CD4-positive, alpha-beta memory T cell (primary cell): ENCODE measurements at regions of chr3 and their contacts with region 1.

Region 1: GRCh38 chr3:150408221-150409102 is at the start of gene TSC22D2:
- DNase-seq: peak; percentile 96 to 98 (median 97)
- H3K4me3 ChIP-seq: peak within 1 kb of the TSS; percentile 79 to 93
- H3K4me3 Mint-ChIP-seq: peak within 1 kb of the TSS; percentile 85 to 98 (median 89)
- H3K27ac ChIP-seq: peak within 1 kb of the TSS; percentile 95
- H3K27ac Mint-ChIP-seq: peak within 1 kb of the TSS; percentile 89 to 99 (median 98)
- H3K4me1 ChIP-seq: peaks cover 34% of the 10 kb centered on the region
- H3K4me1 Mint-ChIP-seq: peaks cover 23 to 36% (median 30%) of the 10 kb centered on the region in 4 donors
- H3K27me3 ChIP-seq: no peaks in the 10 kb centered on the region
- H3K27me3 Mint-ChIP-seq: no peaks in the 10 kb centered on the region
- total RNA-seq, gene TSC22D2: 25.3 to 25.7 TPM

Region 2: DNA sequence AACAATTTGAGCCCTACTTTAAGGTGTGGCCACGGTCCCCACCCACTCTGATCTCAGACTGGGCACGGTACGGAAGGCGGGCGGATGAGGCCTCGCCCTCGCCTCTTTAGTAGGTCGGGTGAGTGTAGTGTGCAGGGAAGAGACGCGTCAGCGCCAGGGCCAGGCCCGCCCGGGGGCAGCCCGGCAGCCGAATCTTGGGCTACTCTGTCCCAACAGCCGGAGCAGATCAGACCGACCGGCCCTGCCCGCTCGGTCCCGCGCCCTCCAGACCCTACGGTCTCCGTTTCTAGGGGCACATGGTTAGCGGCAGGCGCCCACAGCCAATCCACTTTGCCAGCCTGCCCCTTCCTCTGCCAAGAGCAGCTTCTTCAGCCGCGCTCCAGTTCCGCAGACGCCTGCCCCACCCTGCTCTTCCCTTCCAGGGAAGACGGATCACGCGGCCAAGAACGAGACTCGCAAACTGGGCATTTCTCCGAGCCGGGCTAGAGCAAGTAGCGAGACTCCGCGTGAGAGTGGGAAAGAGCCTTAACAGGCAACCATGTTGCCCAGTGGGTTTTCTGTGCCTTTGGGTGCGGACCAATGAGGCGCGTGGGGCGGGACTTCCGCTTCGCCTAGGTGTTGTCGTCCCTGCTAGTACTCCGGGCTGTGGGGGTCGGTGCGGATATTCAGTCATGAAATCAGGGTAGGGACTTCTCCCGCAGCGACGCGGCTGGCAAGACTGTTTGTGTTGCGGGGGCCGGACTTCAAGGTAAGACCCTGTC is 595.7 kb before region 1 on chr3 and contains the start of gene RNF13:
- CTCF ChIA-PET with region 1: no interaction called
- POLR2A ChIA-PET with region 1: interaction called, 7 read pairs
- intact Hi-C with region 1: loop called (anchors 2 kb)
- DNase-seq: peak; percentile 90 to 94 (median 91)
- H3K4me3 ChIP-seq: peak within 1 kb of the TSS; percentile 91 to 92
- H3K4me3 Mint-ChIP-seq: peak within 1 kb of the TSS; percentile 99 to 100 (median 100)
- H3K27ac ChIP-seq: peak within 1 kb of the TSS; percentile 88
- H3K27ac Mint-ChIP-seq: peak within 1 kb of the TSS; percentile 96 to 100 (median 99)
- H3K4me1 ChIP-seq: peaks cover 42% of the 10 kb centered on the region
- H3K4me1 Mint-ChIP-seq: peaks cover 34 to 63% (median 45%) of the 10 kb centered on the region in 4 donors
- H3K27me3 ChIP-seq: no peaks in the 10 kb centered on the region
- H3K27me3 Mint-ChIP-seq: peaks cover 2 to 4% of the 10 kb centered on the region in 2 donors
- total RNA-seq, gene RNF13: 63.3 to 68.2 TPM

Region 3: DNA sequence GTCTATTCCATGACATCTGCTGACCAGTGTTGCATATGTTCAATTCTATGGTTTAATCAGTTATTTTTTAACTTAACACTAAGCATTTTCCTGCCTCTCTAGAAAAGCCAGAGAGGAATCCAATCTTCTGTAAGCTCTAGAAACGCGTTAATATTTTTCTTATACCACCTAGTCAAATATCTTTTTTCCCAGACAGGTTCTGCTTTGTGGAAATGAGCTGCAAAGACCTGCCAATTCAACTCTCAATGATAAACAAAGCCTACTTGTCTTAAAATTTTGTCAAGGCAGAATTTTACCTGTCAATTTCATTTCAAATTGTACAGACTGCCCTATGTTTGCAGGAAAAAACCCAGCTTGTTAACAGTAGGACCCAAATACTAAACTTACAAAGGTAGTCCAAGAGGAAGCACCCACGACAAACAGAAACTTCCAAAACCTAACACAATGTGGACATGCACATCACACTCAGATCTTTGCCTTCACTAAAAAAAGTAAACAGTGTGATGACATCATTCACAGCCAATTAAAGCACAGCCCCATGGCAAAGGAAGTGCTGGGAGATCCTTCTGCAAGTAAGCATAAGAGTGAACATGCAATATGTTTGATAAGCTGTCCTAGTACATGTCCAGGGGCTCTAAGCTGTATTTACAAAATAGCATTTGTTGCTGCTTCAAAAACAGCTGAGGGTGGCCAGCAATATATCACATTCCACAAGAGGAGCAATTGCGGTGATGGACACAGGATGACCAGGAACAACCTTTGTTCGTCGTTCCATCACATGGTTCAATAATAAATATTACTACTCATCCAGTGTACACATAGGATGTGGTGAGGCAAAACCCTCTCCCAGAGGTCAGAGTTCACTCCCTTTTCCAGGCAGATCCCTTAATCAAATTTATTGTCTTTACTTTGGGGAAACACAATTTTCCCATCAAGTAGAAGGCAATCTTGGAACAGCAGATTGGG is 139.8 kb before region 1 on chr3:
- CTCF ChIA-PET with region 1: no interaction called
- POLR2A ChIA-PET with region 1: no interaction called
- intact Hi-C with region 1: no loop called
- DNase-seq: no peak
- H3K4me3 ChIP-seq: no peak overlapping the region
- H3K4me3 Mint-ChIP-seq: no peak overlapping the region
- H3K27ac ChIP-seq: no peak overlapping the region
- H3K27ac Mint-ChIP-seq: no peak overlapping the region
- H3K4me1 ChIP-seq: no peaks in the 10 kb centered on the region
- H3K4me1 Mint-ChIP-seq: no peaks in the 10 kb centered on the region
- H3K27me3 ChIP-seq: no peaks in the 10 kb centered on the region
- H3K27me3 Mint-ChIP-seq: peaks cover 0 to 13% of the 10 kb centered on the region in 2 donors

Region 4: DNA sequence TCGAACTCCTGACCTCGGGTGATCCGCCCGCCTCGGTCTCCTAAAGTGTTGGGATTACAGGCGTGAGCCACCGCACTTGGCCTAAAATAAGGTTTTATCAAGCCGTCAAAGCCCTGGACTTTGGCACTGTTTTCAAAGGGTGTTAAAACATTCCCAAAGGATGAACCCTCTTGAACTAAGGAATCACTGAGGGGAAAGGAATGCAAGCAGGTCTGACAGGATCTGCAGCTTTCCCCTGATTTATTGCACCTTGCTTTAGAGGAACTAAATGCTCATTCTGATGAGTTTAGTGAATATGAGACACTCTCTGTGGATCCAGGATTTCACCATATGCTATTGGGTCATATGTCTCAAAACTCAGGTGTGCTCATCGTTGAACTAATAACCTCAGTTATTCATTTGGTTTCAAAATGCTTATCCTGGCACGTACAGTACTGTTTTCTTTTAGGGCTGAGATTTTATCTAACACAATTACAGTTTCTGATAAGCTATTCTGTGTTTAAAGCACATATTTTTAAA is 63.4 kb before region 1 on chr3:
- CTCF ChIA-PET with region 1: no interaction called
- POLR2A ChIA-PET with region 1: no interaction called
- intact Hi-C with region 1: no loop called
- DNase-seq: no peak
- H3K4me3 ChIP-seq: no peak overlapping the region
- H3K4me3 Mint-ChIP-seq: no peak overlapping the region
- H3K27ac ChIP-seq: no peak overlapping the region
- H3K27ac Mint-ChIP-seq: no peak overlapping the region
- H3K4me1 ChIP-seq: no peaks in the 10 kb centered on the region
- H3K4me1 Mint-ChIP-seq: no peaks in the 10 kb centered on the region
- H3K27me3 ChIP-seq: no peaks in the 10 kb centered on the region
- H3K27me3 Mint-ChIP-seq: peaks cover 3 to 18% of the 10 kb centered on the region in 2 donors

Region 5: GRCh38 chr3:150384296-150385212 is 23.9 kb before region 1 on chr3:
- CTCF ChIA-PET with region 1: interaction called, 6 read pairs
- POLR2A ChIA-PET with region 1: interaction called, 20 read pairs
- intact Hi-C with region 1: loop called (anchors 1 kb)
- DNase-seq: peak; percentile 50 to 67 (median 58)
- H3K4me3 ChIP-seq: peak overlapping the region; percentile 30 to 40
- H3K4me3 Mint-ChIP-seq: peak overlapping the region; percentile 54 to 89 (median 77)
- H3K27ac ChIP-seq: no peak overlapping the region
- H3K27ac Mint-ChIP-seq: peak overlapping the region; percentile 60 to 87 (median 68)
- H3K4me1 ChIP-seq: peaks cover 17% of the 10 kb centered on the region
- H3K4me1 Mint-ChIP-seq: peaks cover 19 to 23% (median 20%) of the 10 kb centered on the region in 4 donors
- H3K27me3 ChIP-seq: no peaks in the 10 kb centered on the region
- H3K27me3 Mint-ChIP-seq: no peaks in the 10 kb centered on the region

Region 6: GRCh38 chr3:150429767-150430671 is 21.6 kb after region 1 on chr3:
- CTCF ChIA-PET with region 1: interaction called, 6 read pairs
- POLR2A ChIA-PET with region 1: interaction called, 13 read pairs
- intact Hi-C with region 1: loop called (anchors 2 kb)
- DNase-seq: no peak
- H3K4me3 ChIP-seq: no peak overlapping the region
- H3K4me3 Mint-ChIP-seq: no peak overlapping the region
- H3K27ac ChIP-seq: no peak overlapping the region
- H3K27ac Mint-ChIP-seq: peak overlapping the region in 4 of 7 donors; percentile 0 to 80 (median 4)
- H3K4me1 ChIP-seq: peaks cover 27% of the 10 kb centered on the region
- H3K4me1 Mint-ChIP-seq: peaks cover 33 to 72% (median 59%) of the 10 kb centered on the region in 4 donors
- H3K27me3 ChIP-seq: no peaks in the 10 kb centered on the region
- H3K27me3 Mint-ChIP-seq: no peaks in the 10 kb centered on the region

Region 7: DNA sequence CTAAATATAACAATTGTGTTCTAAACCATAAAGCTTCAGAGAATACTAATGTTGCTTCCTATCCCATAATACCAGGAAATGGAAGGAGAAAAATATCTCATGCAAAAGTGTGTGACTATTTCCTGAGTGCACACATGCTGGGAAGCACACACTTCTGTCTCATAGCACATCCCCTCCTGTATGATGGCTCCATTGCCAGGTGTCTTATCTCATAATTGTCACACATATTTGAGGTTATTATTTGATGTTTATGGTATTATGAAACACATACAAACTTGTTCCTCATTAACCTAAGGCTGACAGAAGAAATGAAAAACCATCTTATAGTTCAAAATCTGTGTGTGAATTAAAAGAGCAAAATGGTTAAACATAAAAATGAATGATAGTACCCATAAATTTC is 72.4 kb after region 1 on chr3:
- CTCF ChIA-PET with region 1: no interaction called
- POLR2A ChIA-PET with region 1: no interaction called
- intact Hi-C with region 1: no loop called
- DNase-seq: no peak
- H3K4me3 ChIP-seq: no peak overlapping the region
- H3K4me3 Mint-ChIP-seq: no peak overlapping the region
- H3K27ac ChIP-seq: no peak overlapping the region
- H3K27ac Mint-ChIP-seq: no peak overlapping the region
- H3K4me1 ChIP-seq: no peaks in the 10 kb centered on the region
- H3K4me1 Mint-ChIP-seq: no peaks in the 10 kb centered on the region
- H3K27me3 ChIP-seq: no peaks in the 10 kb centered on the region
- H3K27me3 Mint-ChIP-seq: peaks cover 1 to 2% of the 10 kb centered on the region in 2 donors

Region 8: GRCh38 chr3:150546226-150547044 is 138.0 kb after region 1 on chr3 and contains the starts of genes EIF2A and SERP1:
- CTCF ChIA-PET with region 1: interaction called, 6 read pairs
- POLR2A ChIA-PET with region 1: interaction called, 74 read pairs
- intact Hi-C with region 1: loop called (anchors 1 kb)
- DNase-seq: peak; percentile 99 to 100 (median 100)
- H3K4me3 ChIP-seq: peak within 1 kb of the TSS; percentile 77 to 89
- H3K4me3 Mint-ChIP-seq: peak within 1 kb of the TSS; percentile 92 to 99 (median 97)
- H3K27ac ChIP-seq: peak within 1 kb of the TSS; percentile 99
- H3K27ac Mint-ChIP-seq: peak within 1 kb of the TSS; percentile 95 to 100 (median 99)
- H3K4me1 ChIP-seq: peaks cover 62% of the 10 kb centered on the region
- H3K4me1 Mint-ChIP-seq: peaks cover 39 to 81% (median 61%) of the 10 kb centered on the region in 4 donors
- H3K27me3 ChIP-seq: no peaks in the 10 kb centered on the region
- H3K27me3 Mint-ChIP-seq: no peaks in the 10 kb centered on the region
- total RNA-seq, gene EIF2A: 90.8 to 95.3 TPM
- total RNA-seq, gene SERP1: 122 to 128 TPM

Region 9: GRCh38 chr3:150763122-150763841 is 354.8 kb after region 1 on chr3 and contains the start of gene SIAH2:
- CTCF ChIA-PET with region 1: interaction called, 3 read pairs
- POLR2A ChIA-PET with region 1: interaction called, 107 read pairs
- intact Hi-C with region 1: loop called (anchors 1 kb)
- DNase-seq: peak; percentile 94 to 98 (median 95)
- H3K4me3 ChIP-seq: peak within 1 kb of the TSS; percentile 80 to 97
- H3K4me3 Mint-ChIP-seq: peak within 1 kb of the TSS; percentile 97 to 100 (median 98)
- H3K27ac ChIP-seq: peak within 1 kb of the TSS; percentile 98
- H3K27ac Mint-ChIP-seq: peak within 1 kb of the TSS; percentile 98 to 100 (median 100)
- H3K4me1 ChIP-seq: peaks cover 47% of the 10 kb centered on the region
- H3K4me1 Mint-ChIP-seq: peaks cover 26 to 60% (median 47%) of the 10 kb centered on the region in 4 donors
- H3K27me3 ChIP-seq: no peaks in the 10 kb centered on the region
- H3K27me3 Mint-ChIP-seq: no peaks in the 10 kb centered on the region
- total RNA-seq, gene SIAH2: 28.3 to 29.5 TPM